ENCODE measurements at regions of chr7 and their contacts with region 1.

Region 1: GRCh38 chr7:101287032-101287431 is 34.6 kb downstream of the IFT22 start:
- DNase-seq: no peak
- ATAC-seq: no peak
- H3K4me3 ChIP-seq: no peak overlapping the region
- H3K27ac ChIP-seq: no peak overlapping the region
- H3K4me1 ChIP-seq: peaks cover 5% of the 10 kb centered on the region; the same call in 1 of the 2 replicates
- H3K27me3 ChIP-seq: no peaks in the 10 kb centered on the region; the same call in none of the 2 replicates
- CTCF ChIP-seq: no peak

Region 2: GRCh38 chr7:100208911-100209408 is 1078.1 kb before region 1 on chr7:
- CTCF ChIA-PET with region 1: no interaction called
- POLR2A ChIA-PET with region 1: no interaction called
- in situ Hi-C with region 1: no loop called
- intact Hi-C with region 1: no loop called
- DNase-seq: no peak
- ATAC-seq: 0 out of 2 replicates have a peak, but pooled peaks have one; percentile 27
- H3K4me3 ChIP-seq: no peak overlapping the region
- H3K27ac ChIP-seq: no peak overlapping the region
- H3K4me1 ChIP-seq: no peaks in the 10 kb centered on the region
- H3K27me3 ChIP-seq: no peaks in the 10 kb centered on the region; the same call in none of the 2 replicates
- CTCF ChIP-seq: no peak

Region 3: GRCh38 chr7:100889761-100890634 is 397.0 kb before region 1 on chr7:
- CTCF ChIA-PET with region 1: interaction called, 4 read pairs
- POLR2A ChIA-PET with region 1: no interaction called
- in situ Hi-C with region 1: no loop called
- intact Hi-C with region 1: loop called (anchors 5 kb)
- DNase-seq: no peak
- ATAC-seq: peak; percentile 87
- H3K4me3 ChIP-seq: peak overlapping the region; percentile 62 to 72
- H3K27ac ChIP-seq: peak overlapping the region; percentile 87
- H3K4me1 ChIP-seq: peaks cover 42% of the 10 kb centered on the region
- H3K27me3 ChIP-seq: no peaks in the 10 kb centered on the region
- CTCF ChIP-seq: no peak

Region 4: GRCh38 chr7:101138213-101138870 is 148.7 kb before region 1 on chr7:
- CTCF ChIA-PET with region 1: interaction called, 40 read pairs
- POLR2A ChIA-PET with region 1: no interaction called
- in situ Hi-C with region 1: no loop called
- intact Hi-C with region 1: no loop called
- DNase-seq: peak; percentile 100
- ATAC-seq: peak; percentile 84
- H3K4me3 ChIP-seq: no peak overlapping the region
- H3K27ac ChIP-seq: peak overlapping the region; percentile 91
- H3K4me1 ChIP-seq: peaks cover 39% of the 10 kb centered on the region
- H3K27me3 ChIP-seq: no peaks in the 10 kb centered on the region
- CTCF ChIP-seq: peak; percentile 94

Region 5: GRCh38 chr7:101243646-101244374 is 43.2 kb before region 1 on chr7:
- CTCF ChIA-PET with region 1: interaction called, 10 read pairs
- POLR2A ChIA-PET with region 1: no interaction called
- in situ Hi-C with region 1: no loop called
- intact Hi-C with region 1: no loop called
- DNase-seq: no peak
- ATAC-seq: no peak
- H3K4me3 ChIP-seq: peak overlapping the region; percentile 92 to 100
- H3K27ac ChIP-seq: peak overlapping the region; percentile 97
- H3K4me1 ChIP-seq: peaks cover 12% of the 10 kb centered on the region; the same call in 1 of the 2 replicates
- H3K27me3 ChIP-seq: no peaks in the 10 kb centered on the region
- CTCF ChIP-seq: no peak

Region 6: DNA sequence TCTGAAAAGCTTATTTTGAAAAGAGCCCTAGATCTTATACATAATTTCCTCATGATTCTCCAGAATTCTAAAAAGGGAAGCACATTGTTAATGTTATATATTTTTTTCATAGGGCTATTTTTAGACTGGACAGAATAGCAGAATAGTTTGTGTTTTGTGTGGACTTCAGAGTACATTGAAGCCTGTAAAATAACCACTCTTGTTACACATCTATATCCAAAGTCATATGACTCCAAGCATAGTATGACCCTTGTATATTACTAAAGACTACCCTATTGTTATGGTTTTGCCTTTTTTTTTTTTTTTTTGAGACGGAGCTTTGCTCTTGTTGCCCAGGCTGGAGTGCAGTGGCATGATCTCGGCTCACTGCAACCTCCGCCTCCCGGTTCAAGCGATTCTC is 16.0 kb before region 1 on chr7:
- CTCF ChIA-PET with region 1: interaction called, 10 read pairs
- POLR2A ChIA-PET with region 1: no interaction called
- in situ Hi-C with region 1: no loop called
- intact Hi-C with region 1: no loop called
- DNase-seq: no peak
- ATAC-seq: no peak
- H3K4me3 ChIP-seq: no peak overlapping the region
- H3K27ac ChIP-seq: no peak overlapping the region
- H3K4me1 ChIP-seq: no peaks in the 10 kb centered on the region
- H3K27me3 ChIP-seq: no peaks in the 10 kb centered on the region
- CTCF ChIP-seq: no peak

Region 7: GRCh38 chr7:101308245-101309085 is 21.4 kb after region 1 on chr7:
- CTCF ChIA-PET with region 1: interaction called, 3 read pairs
- POLR2A ChIA-PET with region 1: interaction called, 12 read pairs
- in situ Hi-C with region 1: no loop called
- intact Hi-C with region 1: no loop called
- DNase-seq: no peak
- ATAC-seq: peak; percentile 97
- H3K4me3 ChIP-seq: peak overlapping the region; percentile 54 to 57
- H3K27ac ChIP-seq: peak overlapping the region; percentile 59
- H3K4me1 ChIP-seq: no peaks in the 10 kb centered on the region
- H3K27me3 ChIP-seq: no peaks in the 10 kb centered on the region
- CTCF ChIP-seq: no peak

Region 8: DNA sequence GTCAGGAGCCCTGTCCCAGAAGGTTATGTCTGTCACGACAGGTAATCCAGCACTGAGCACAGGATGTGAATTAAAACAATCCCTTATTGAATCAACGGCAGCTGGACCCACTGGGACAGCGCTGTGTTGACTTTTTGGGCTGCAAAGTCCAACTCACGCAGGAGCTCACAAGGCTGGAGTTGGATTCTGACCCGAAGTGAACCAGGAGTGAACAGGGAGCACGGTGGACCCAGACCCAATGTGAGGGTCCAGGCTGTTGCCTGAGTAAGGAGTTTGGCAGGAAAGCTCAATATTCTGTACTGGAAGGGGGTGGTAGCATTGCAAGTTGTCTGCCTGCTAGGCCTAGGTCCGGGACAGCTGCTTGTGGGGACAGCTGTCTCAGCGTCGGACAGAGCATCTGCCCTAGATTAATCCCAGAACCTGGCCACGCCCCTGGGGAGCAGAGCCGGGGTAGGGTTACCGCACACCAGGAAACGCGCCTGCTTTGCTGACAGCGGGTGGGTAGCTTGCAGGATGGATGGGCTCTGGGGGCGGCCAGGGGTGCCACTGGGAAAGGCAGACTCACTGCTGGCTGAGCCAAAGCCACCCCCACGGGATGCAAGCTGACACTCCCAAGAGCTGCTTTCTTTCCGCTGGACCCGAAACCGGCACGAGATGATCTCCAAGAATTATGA is 99.7 kb after region 1 on chr7:
- CTCF ChIA-PET with region 1: interaction called, 11 read pairs
- POLR2A ChIA-PET with region 1: no interaction called
- in situ Hi-C with region 1: no loop called
- intact Hi-C with region 1: no loop called
- DNase-seq: no peak
- ATAC-seq: peak; percentile 83
- H3K4me3 ChIP-seq: peak overlapping the region; percentile 4 to 12; a peak in 2 of 4 replicates
- H3K27ac ChIP-seq: peak overlapping the region; percentile 65
- H3K4me1 ChIP-seq: peaks cover 14% of the 10 kb centered on the region
- H3K27me3 ChIP-seq: no peaks in the 10 kb centered on the region
- CTCF ChIP-seq: no peak